ENCODE measurements at regions of chr1 and their contacts with region 1.

Region 1: DNA sequence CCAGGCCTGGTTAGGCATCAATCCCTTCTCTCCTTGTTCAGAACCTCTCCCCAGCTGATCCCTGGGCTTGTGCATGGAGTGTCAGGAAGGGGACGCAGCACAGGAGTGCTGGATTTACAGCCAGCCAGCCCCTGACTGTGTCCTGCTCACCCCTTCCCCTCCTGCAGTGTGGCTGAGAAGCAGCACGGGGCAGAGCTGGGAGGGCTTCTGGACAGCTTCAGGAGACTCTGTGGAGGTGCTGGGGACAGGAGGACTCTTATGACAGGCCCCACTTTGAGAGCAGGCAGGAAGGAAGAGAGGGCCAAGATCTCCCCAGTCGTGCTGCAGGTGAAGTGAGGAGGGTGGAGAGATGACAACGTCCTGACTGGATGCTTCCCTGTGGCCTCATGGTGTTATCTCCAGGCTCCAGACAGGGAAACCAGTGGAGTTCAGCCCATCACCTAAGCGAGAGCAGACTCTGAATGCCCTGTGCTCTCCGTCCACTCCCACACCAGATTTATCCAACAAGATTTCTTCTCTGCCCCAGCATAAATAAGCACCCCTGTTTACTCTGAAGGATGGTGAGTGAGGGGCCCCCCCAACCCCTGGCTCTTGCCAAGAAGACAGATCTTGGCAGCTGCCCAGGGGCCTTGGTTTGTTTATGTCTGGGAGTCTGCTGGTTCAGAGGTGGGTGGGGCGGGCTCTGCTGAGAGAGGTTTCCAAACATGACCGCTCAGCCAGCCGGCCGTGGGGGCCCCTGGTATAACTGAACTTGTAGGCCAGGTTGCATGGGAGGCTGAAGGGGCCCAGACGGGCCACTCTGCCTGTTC is 21.3 kb downstream of the TMCC2 start:
- DNase-seq: no peak
- ATAC-seq: no peak
- H3K4me3 Mint-ChIP-seq: no peak overlapping the region
- H3K27ac Mint-ChIP-seq: peak overlapping the region; percentile 30
- H3K4me1 Mint-ChIP-seq: peaks cover 5% of the 10 kb centered on the region
- H3K27me3 Mint-ChIP-seq: peaks cover 2% of the 10 kb centered on the region

Region 2: GRCh38 chr1:205237526-205238484 is 11.2 kb before region 1 on chr1:
- CTCF ChIA-PET with region 1: interaction called, 172 read pairs
- POLR2A ChIA-PET with region 1: interaction called, 9 read pairs
- intact Hi-C with region 1: loop called in 1 of 2 experiments (anchors 1 kb)
- DNase-seq: peak; percentile 82
- ATAC-seq: peak; percentile 89
- H3K4me3 Mint-ChIP-seq: peak overlapping the region; percentile 56
- H3K27ac Mint-ChIP-seq: peak overlapping the region; percentile 95
- H3K4me1 Mint-ChIP-seq: peaks cover 58% of the 10 kb centered on the region
- H3K27me3 Mint-ChIP-seq: no peaks in the 10 kb centered on the region

Region 3: DNA sequence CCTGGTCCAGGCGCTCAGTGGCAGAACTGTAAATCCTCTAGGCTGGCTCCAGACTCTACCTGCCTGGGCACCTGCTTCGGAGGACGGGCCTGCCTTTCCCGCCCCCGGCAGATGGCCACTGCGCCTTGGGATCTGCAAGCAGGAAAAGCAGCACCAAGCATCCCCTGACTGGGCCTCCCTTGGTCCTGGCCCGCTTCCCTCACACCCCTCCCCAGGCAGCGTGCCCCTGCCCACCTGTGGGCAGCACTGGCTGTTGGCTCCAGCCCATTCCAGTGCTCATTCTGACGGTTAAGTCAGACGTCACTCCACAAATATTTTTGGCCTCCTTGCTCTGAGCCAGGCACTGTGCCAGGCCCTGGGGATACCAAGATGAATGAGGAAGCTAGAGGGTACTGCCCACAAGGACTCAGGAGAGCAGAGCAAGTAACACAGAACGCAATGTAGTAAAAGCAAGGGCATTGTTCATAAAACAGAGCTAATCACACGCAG is 228.8 kb after region 1 on chr1:
- CTCF ChIA-PET with region 1: no interaction called
- POLR2A ChIA-PET with region 1: no interaction called
- intact Hi-C with region 1: no loop called
- DNase-seq: no peak
- ATAC-seq: no peak
- H3K4me3 Mint-ChIP-seq: no peak overlapping the region
- H3K27ac Mint-ChIP-seq: no peak overlapping the region
- H3K4me1 Mint-ChIP-seq: peaks cover 21% of the 10 kb centered on the region
- H3K27me3 Mint-ChIP-seq: peaks cover 50% of the 10 kb centered on the region